ENCODE measurements at regions of chr2 and their contacts with region 1.

Region 1: GRCh38 chr2:208254871-208255556 is at the start of gene IDH1:
- DNase-seq: peak; percentile 98
- H3K4me3 ChIP-seq: peak within 1 kb of the TSS; percentile 78 to 86
- H3K27ac ChIP-seq: peak within 1 kb of the TSS; percentile 71 to 77
- H3K4me1 ChIP-seq: peaks cover 0 to 21% (median 18%) of the 10 kb centered on the region in 4 donors
- H3K27me3 ChIP-seq: no peaks in the 10 kb centered on the region
- CTCF ChIP-seq: peak in 1 of 2 experiments; percentile 15

Region 2: DNA sequence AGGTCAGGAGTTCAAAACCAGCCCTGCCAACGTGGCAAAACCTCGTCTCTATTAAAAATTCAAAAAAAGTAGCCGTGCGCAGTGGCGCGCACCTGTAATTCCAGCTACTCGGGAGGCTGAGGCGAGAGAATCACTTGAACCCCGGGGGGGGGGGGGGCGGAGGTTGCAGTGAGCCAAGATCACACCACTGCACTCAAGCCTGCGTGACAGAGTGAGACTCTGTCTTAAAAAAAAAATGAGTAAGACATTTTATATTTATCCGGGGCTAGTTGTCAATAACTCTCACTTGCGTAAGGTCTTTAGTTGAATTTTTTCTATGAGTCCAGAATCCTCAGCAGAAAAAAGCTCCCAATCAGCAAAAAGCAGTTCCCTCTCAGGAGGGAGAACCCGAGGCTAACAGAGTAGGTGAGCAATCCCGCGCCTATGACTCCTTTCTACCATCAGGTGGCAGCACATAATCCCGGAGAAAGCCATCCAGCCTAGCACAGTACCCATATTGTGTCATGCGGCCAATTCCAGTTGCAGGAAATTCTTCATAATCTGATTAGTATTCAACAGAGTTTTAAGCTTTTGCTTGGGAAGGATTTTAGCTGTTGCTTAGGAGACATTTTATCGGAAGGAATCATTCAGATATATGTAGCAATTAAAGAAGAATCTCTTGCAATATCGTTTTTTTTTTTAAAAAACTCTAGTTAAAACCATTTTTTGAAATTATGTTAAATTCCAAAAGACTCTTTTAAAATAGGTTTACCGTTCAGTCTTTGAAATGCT is 79.8 kb before region 1 on chr2:
- intact Hi-C with region 1: loop called (anchors 10 kb)
- DNase-seq: peak; percentile 80 to 86
- H3K4me3 ChIP-seq: no peak overlapping the region
- H3K27ac ChIP-seq: no peak overlapping the region
- H3K4me1 ChIP-seq: no peaks in the 10 kb centered on the region
- H3K27me3 ChIP-seq: no peaks in the 10 kb centered on the region
- CTCF ChIP-seq: peak; percentile 72 to 90

Region 3: GRCh38 chr2:208189810-208190503 is 65.1 kb before region 1 on chr2 and contains the start of gene C2orf80:
- intact Hi-C with region 1: no loop called
- DNase-seq: no peak
- H3K4me3 ChIP-seq: no peak within 1 kb of the TSS
- H3K27ac ChIP-seq: no peak within 1 kb of the TSS
- H3K4me1 ChIP-seq: no peaks in the 10 kb centered on the region
- H3K27me3 ChIP-seq: peaks cover 0 to 3% of the 10 kb centered on the region in 2 donors
- CTCF ChIP-seq: no peak

Region 4: GRCh38 chr2:208222351-208222750 is 32.7 kb before region 1 on chr2:
- intact Hi-C with region 1: no loop called
- DNase-seq: no peak
- H3K4me3 ChIP-seq: no peak overlapping the region
- H3K27ac ChIP-seq: no peak overlapping the region
- H3K4me1 ChIP-seq: no peaks in the 10 kb centered on the region
- H3K27me3 ChIP-seq: no peaks in the 10 kb centered on the region
- CTCF ChIP-seq: no peak

Measured in tibial artery (tissue), 4 donors.